Activated CD4-positive, alpha-beta T cell treated with anti-CD3 and anti-CD28 coated beads, Interleukin-2, amount 10 ng/mL, durations not matched to agents 7 days and 5 days (primary cell): ENCODE measurements at regions of chr11 and their contacts with region 1.

Region 1: GRCh38 chr11:113587308-113587739 is 112.1 kb upstream of the DRD2 start:
- DNase-seq: peak; percentile 23
- H3K4me3 Mint-ChIP-seq: no peak overlapping the region
- H3K27ac Mint-ChIP-seq: peak overlapping the region; percentile 0
- H3K4me1 Mint-ChIP-seq: peaks cover 21% of the 10 kb centered on the region
- H3K27me3 Mint-ChIP-seq: no peaks in the 10 kb centered on the region

Region 2: GRCh38 chr11:113773416-113774173 is 186.3 kb after region 1 on chr11 and contains the start of gene ZW10:
- CTCF ChIA-PET with region 1: interaction called, 11 read pairs
- POLR2A ChIA-PET with region 1: no interaction called
- DNase-seq: peak; percentile 94
- H3K4me3 Mint-ChIP-seq: peak within 1 kb of the TSS; percentile 99
- H3K27ac Mint-ChIP-seq: peak within 1 kb of the TSS; percentile 97
- H3K4me1 Mint-ChIP-seq: peaks cover 31% of the 10 kb centered on the region
- H3K27me3 Mint-ChIP-seq: peaks cover 8% of the 10 kb centered on the region
- total RNA-seq, gene ZW10: 19.9 to 20.8 TPM